MCF 10A (cell line): ENCODE measurements at regions of chr17 and their contacts with region 1.

Region 1: DNA sequence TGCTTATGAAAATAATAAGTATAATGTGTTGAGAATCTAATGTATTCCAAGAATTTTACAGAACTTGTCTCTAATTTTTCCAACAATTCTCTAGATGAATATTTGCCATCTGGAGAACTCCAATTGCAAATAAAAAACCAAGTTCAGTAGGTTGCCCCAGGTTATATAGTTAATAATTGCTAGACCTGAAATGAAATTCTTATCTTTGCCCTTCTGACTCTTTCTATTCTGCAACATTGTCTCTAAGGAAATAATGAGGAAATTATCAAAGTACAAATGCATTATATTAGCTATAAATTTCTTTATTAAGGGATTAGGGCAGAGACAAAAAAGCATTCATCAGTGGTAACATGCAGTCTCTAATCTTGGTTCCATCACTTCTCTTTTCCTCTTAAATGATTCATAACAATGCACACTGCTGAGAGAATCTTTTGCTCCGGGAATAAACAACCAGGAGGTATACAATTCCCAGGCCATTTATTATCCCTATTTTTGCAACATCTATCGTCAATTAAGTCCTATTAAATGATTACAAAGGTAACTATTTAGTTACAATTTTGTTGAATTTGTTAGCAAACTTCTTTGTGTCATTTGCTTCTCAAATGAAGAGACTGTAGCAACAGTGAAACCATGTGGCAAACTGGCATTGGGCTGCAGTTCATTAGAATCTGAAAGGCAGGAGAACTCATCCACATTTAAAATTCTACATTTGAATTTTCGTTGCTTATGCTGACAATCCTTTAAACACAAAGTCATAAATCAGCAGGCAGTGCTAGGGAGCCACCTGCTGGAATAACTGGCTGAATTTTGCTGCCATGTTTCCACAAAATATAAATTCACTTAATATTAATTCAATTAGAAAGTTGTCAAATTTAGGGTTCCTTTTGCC is 349.6 kb downstream of the KIF2B start:
- DNase-seq: peak; percentile 16
- H3K4me3 Mint-ChIP-seq: no peak overlapping the region
- H3K27ac Mint-ChIP-seq: no peak overlapping the region
- H3K4me1 Mint-ChIP-seq: peaks cover 6% of the 10 kb centered on the region
- H3K27me3 Mint-ChIP-seq: no peaks in the 10 kb centered on the region
- CTCF ChIP-seq: peak; percentile 77

Region 2: DNA sequence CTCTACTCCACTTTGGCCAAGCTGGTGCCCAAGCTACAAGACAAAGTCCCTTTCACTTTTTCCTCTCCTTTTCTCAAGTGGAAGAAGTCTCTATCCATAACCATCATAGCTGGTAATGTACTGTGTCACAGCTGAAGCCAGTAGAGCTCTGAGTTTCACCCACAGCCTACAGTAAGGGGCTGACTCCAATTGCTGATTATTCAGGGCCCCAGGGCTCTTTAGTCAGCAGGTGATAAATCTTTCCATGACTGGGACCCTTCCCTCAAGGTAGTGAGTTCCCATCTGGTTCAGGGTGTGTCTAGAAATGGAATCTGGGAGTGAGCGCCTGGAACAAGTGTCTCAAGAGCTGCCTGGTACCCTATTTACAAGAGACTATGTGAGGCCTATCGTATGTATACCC is 1577.8 kb before region 1 on chr17:
- CTCF ChIA-PET with region 1: no interaction called
- POLR2A ChIA-PET with region 1: no interaction called
- intact Hi-C with region 1: loop called (anchors 2 kb)
- DNase-seq: no peak
- H3K4me3 Mint-ChIP-seq: no peak overlapping the region
- H3K27ac Mint-ChIP-seq: no peak overlapping the region
- H3K4me1 Mint-ChIP-seq: no peaks in the 10 kb centered on the region
- H3K27me3 Mint-ChIP-seq: no peaks in the 10 kb centered on the region
- CTCF ChIP-seq: no peak

Region 3: DNA sequence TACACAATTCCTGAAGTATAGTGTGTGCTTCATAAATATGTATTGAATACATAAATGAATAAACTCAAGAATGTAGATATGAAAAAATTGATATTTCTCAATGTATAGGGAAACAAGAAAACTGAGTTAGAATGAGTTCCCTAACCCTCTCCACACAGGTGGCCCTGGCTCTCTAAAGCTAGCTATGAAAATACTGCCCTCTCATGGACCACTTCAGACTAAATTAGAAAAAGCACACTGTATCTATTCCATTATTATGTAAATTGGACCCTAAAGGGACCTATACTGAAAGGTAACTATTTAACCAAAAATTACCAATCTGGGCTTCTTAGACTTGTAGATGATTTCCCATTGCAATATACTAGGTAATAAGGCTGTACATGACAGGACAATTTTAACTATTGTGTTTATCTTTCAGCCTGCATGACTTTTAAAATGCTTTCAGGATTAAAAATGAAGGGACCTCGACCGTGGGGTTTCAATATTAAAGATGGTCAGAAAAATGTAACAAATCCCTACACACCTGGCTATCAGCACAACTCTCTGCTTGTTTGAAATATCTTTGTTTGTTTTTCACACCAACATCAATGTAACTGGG is 1022.1 kb before region 1 on chr17:
- CTCF ChIA-PET with region 1: no interaction called
- POLR2A ChIA-PET with region 1: no interaction called
- intact Hi-C with region 1: loop called (anchors 5 kb)
- DNase-seq: peak; percentile 9
- H3K4me3 Mint-ChIP-seq: no peak overlapping the region
- H3K27ac Mint-ChIP-seq: no peak overlapping the region
- H3K4me1 Mint-ChIP-seq: no peaks in the 10 kb centered on the region
- H3K27me3 Mint-ChIP-seq: peaks cover 27% of the 10 kb centered on the region
- CTCF ChIP-seq: no peak

Region 4: DNA sequence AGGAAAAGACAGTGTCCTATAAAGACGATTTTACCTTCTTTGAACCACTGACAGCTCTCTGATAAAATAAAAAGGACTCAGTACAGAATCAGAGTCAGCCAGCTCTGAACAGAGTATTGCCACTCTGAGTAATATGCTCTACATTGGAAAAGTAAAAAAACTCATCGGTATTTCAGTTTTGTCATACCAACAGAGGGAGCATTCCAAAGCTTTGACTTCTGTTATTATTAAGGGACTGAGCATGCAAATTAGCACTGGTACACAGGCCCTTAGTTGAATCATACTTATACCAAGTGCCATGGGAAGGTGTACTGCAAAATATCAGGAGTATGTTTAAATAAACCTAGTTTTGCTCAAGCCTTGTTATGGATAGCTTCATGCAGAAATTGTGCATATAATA is 858.6 kb before region 1 on chr17:
- CTCF ChIA-PET with region 1: interaction called, 3 read pairs
- POLR2A ChIA-PET with region 1: no interaction called
- intact Hi-C with region 1: loop called (anchors 2 kb)
- DNase-seq: peak; percentile 1
- H3K4me3 Mint-ChIP-seq: no peak overlapping the region
- H3K27ac Mint-ChIP-seq: no peak overlapping the region
- H3K4me1 Mint-ChIP-seq: peaks cover 11% of the 10 kb centered on the region
- H3K27me3 Mint-ChIP-seq: no peaks in the 10 kb centered on the region
- CTCF ChIP-seq: no peak

Region 5: GRCh38 chr17:53626286-53626685 is 546.1 kb before region 1 on chr17:
- CTCF ChIA-PET with region 1: no interaction called
- POLR2A ChIA-PET with region 1: no interaction called
- intact Hi-C with region 1: loop called (anchors 5 kb)
- DNase-seq: peak; percentile 59
- H3K4me3 Mint-ChIP-seq: no peak overlapping the region
- H3K27ac Mint-ChIP-seq: no peak overlapping the region
- H3K4me1 Mint-ChIP-seq: peaks cover 12% of the 10 kb centered on the region
- H3K27me3 Mint-ChIP-seq: no peaks in the 10 kb centered on the region
- CTCF ChIP-seq: no peak

Region 6: GRCh38 chr17:54102246-54102645 is 70.1 kb before region 1 on chr17:
- CTCF ChIA-PET with region 1: no interaction called
- POLR2A ChIA-PET with region 1: no interaction called
- intact Hi-C with region 1: no loop called
- DNase-seq: no peak
- H3K4me3 Mint-ChIP-seq: no peak overlapping the region
- H3K27ac Mint-ChIP-seq: no peak overlapping the region
- H3K4me1 Mint-ChIP-seq: no peaks in the 10 kb centered on the region
- H3K27me3 Mint-ChIP-seq: no peaks in the 10 kb centered on the region
- CTCF ChIP-seq: no peak

Region 7: GRCh38 chr17:54426296-54426886 is 254.1 kb after region 1 on chr17:
- CTCF ChIA-PET with region 1: interaction called, 4 read pairs
- POLR2A ChIA-PET with region 1: no interaction called
- intact Hi-C with region 1: loop called (anchors 1 kb)
- DNase-seq: peak; percentile 24
- H3K4me3 Mint-ChIP-seq: no peak overlapping the region
- H3K27ac Mint-ChIP-seq: no peak overlapping the region
- H3K4me1 Mint-ChIP-seq: no peaks in the 10 kb centered on the region
- H3K27me3 Mint-ChIP-seq: no peaks in the 10 kb centered on the region
- CTCF ChIP-seq: peak; percentile 60